PC-3 (cell line): ENCODE measurements at regions of chr3 and their contacts with region 1.

Region 1: DNA sequence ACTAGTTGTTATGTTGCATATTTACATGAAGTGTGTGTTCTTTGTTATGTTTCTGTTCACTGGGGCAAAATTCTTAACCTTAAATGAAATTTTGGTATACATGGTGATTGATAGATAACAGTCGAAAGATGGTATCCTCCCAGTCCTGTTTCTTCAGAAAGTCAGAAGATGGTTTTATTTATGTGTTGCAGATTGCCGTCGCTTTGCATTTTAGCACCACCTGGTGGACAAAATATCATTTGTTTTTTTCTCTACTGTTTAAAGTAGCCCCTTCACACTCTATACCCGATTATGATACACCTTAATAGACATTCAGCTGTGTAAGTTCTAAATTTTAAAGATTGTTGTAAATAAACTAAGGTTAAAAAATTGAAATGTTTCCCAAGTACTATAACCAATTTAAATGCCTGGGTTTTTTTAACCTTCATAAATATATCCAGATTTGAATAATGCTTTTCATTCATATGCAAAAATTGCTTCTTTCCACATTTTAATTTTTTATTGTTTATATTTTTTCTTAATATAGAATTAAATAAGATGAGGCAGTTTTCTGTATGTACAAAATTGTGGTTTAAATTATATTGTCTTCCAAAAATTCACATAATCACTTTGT is 152.2 kb downstream of the ALCAM start:
- DNase-seq: peak; percentile 90
- ATAC-seq: peak; percentile 53
- H3K4me3 ChIP-seq: no peak overlapping the region
- H3K27ac ChIP-seq: no peak overlapping the region
- H3K4me1 ChIP-seq: peaks cover 45% of the 10 kb centered on the region
- H3K27me3 ChIP-seq: no peaks in the 10 kb centered on the region
- CTCF ChIP-seq: peak; percentile 86

Region 2: DNA sequence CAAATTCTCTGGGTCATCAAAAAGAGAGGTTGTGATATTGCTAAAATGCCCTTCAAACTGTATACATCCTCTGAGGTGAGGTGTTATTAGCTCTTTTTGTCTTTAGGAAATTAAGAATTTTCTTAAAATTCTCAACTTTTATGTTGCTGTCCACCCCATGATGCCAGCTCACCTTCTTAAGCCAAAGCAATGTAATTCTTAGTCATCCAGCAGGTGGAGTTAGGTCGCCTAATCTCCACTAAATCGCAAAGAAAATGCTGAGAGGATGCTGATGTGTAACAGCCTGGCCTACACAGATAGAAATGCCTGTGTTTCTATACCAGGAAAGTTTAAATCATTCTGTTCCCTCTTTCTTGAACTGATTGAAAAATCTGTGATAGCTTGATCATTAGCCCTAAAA is 922.4 kb before region 1 on chr3:
- CTCF ChIA-PET with region 1: interaction called, 3 read pairs
- POLR2A ChIA-PET with region 1: no interaction called
- intact Hi-C with region 1: loop called (anchors 2 kb)
- DNase-seq: peak; percentile 84
- ATAC-seq: peak; percentile 82
- H3K4me3 ChIP-seq: no peak overlapping the region
- H3K27ac ChIP-seq: peak overlapping the region; percentile 38
- H3K4me1 ChIP-seq: peaks cover 28% of the 10 kb centered on the region
- H3K27me3 ChIP-seq: no peaks in the 10 kb centered on the region
- CTCF ChIP-seq: peak; percentile 86

Region 3: DNA sequence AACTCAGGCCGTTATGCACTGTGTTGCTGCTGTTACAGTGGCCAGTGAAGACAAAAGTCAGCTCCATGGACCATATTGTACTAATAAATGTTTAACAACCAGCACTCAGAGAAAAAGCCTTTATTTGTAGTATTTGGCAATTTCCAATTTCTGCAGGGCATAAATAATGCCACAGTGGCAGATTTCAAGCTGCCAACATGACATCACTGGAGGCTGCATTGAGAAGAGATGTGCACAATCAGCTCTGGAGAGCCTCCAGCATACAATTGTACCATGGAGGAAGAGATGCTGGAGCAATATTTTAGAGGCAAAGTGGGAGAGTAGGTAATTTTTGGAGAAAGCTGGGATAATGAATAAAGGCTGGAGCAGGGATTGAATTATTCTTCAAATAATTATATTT is 161.9 kb before region 1 on chr3:
- CTCF ChIA-PET with region 1: no interaction called
- POLR2A ChIA-PET with region 1: no interaction called
- intact Hi-C with region 1: no loop called
- DNase-seq: no peak
- ATAC-seq: no peak
- H3K4me3 ChIP-seq: no peak overlapping the region
- H3K27ac ChIP-seq: no peak overlapping the region
- H3K4me1 ChIP-seq: peaks cover 78% of the 10 kb centered on the region
- H3K27me3 ChIP-seq: no peaks in the 10 kb centered on the region
- CTCF ChIP-seq: no peak